Panc1 (cell line): ENCODE measurements at regions of chr6 and their contacts with region 1.

Region 1: GRCh38 chr6:3977875-3978711 is 100.8 kb downstream of the FAM217A start:
- DNase-seq: peak; percentile 50
- ATAC-seq: peak; percentile 98
- H3K4me3 ChIP-seq: no peak overlapping the region
- H3K27ac ChIP-seq: no peak overlapping the region
- H3K4me1 ChIP-seq: no peaks in the 10 kb centered on the region
- H3K27me3 ChIP-seq: no peaks in the 10 kb centered on the region
- CTCF ChIP-seq: peak; percentile 81

Region 2: DNA sequence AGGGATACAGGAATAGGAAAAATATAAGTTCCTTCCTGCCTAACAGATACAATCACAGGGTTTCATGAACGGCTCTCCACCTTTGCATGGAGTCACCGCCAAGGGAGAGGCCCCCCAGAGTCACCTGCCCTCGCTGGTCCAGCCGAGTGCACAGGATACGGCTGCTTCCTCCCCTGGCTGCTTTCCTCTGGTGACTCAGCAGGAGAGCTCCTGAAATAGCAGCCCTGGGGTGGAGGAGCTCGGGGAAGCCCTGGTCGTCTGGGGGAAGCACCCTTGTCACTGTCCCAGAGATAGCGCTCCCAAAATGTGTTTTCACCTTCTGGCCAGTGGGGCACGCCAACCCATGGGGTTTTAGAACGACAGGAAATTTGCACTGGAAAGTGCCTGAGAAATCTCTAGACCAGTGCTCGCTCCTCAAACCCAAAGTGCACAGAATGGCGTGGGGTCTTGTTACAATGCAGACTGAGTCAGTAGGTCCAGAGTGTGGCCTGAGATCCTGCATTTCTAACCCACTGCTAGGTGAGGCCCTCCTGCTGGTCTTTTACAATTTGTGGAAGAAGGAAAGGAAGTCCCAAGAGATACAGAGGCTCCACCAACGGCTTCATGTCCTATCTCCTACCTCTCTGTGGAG is 164.8 kb before region 1 on chr6:
- CTCF ChIA-PET with region 1: no interaction called
- POLR2A ChIA-PET with region 1: no interaction called
- in situ Hi-C with region 1: loop called (anchors 25 kb)
- intact Hi-C with region 1: no loop called
- DNase-seq: no peak
- ATAC-seq: peak; percentile 64
- H3K4me3 ChIP-seq: no peak overlapping the region
- H3K27ac ChIP-seq: peak overlapping the region; percentile 53; the same call in 1 of the 2 replicates
- H3K4me1 ChIP-seq: peaks cover 18% of the 10 kb centered on the region
- H3K27me3 ChIP-seq: no peaks in the 10 kb centered on the region
- CTCF ChIP-seq: no peak

Region 3: GRCh38 chr6:3956054-3956453 is 22.0 kb before region 1 on chr6:
- CTCF ChIA-PET with region 1: no interaction called
- POLR2A ChIA-PET with region 1: interaction called, 14 read pairs
- in situ Hi-C with region 1: no loop called
- intact Hi-C with region 1: no loop called
- DNase-seq: no peak
- ATAC-seq: no peak
- H3K4me3 ChIP-seq: no peak overlapping the region
- H3K27ac ChIP-seq: no peak overlapping the region
- H3K4me1 ChIP-seq: no peaks in the 10 kb centered on the region
- H3K27me3 ChIP-seq: no peaks in the 10 kb centered on the region
- CTCF ChIP-seq: no peak